ENCODE measurements at regions of chr2 and their contacts with region 1.

Region 1: GRCh38 chr2:15560988-15561573 is at the start of gene NBAS:
- DNase-seq: peak; percentile 90
- ATAC-seq: peak; percentile 87
- H3K4me3 Mint-ChIP-seq: peak within 1 kb of the TSS; percentile 92
- H3K27ac Mint-ChIP-seq: peak within 1 kb of the TSS; percentile 90
- H3K4me1 Mint-ChIP-seq: peaks cover 26% of the 10 kb centered on the region
- H3K27me3 Mint-ChIP-seq: no peaks in the 10 kb centered on the region
- CTCF ChIP-seq: no peak
- total RNA-seq, gene NBAS: 40.9 to 41.9 TPM

Region 2: DNA sequence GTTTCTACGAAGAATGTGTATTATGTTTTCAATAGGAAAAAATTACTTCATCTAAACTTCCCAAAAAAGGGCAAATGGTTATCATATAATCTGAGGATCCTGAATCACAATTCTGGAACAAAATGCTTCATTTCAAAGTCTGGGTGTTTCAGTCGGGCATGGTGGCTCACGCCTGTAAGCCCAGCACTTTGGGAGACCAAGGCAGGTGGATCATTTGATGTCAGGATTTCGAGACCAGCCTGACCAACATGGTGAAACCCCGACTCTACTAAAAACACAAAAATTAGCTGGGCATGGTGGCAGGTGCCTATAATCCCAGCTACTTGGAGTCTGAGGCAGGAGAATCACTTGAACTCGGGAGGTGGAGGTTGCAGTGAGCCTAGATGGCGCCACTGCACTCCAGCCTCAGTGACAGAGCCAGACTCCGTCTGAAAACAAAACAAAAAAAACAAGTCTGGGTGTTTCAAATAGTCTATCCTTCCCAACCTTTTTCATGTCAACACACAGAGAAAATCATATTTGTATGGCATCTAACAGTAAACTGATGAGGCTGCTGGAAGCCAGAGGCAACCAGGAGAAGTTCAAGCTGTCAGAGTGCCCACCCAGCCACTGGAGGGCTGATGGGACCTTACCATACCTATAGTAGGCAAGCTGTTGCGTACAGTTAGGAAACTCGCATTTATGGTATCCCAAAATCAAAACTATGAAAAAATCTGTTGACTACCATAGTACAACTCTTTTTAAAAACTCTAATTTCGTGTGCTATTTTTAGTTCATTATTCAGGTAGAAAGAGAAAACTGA is 14.6 kb before region 1 on chr2:
- CTCF ChIA-PET with region 1: interaction called, 12 read pairs
- POLR2A ChIA-PET with region 1: interaction called, 11 read pairs
- intact Hi-C with region 1: no loop called
- DNase-seq: peak; percentile 10
- ATAC-seq: no peak
- H3K4me3 Mint-ChIP-seq: no peak overlapping the region
- H3K27ac Mint-ChIP-seq: no peak overlapping the region
- H3K4me1 Mint-ChIP-seq: no peaks in the 10 kb centered on the region
- H3K27me3 Mint-ChIP-seq: no peaks in the 10 kb centered on the region
- CTCF ChIP-seq: peak; percentile 55

Region 3: GRCh38 chr2:15591692-15592463 is 30.8 kb after region 1 on chr2 and contains the start of gene DDX1:
- CTCF ChIA-PET with region 1: no interaction called
- POLR2A ChIA-PET with region 1: interaction called, 10 read pairs
- intact Hi-C with region 1: no loop called
- DNase-seq: peak; percentile 84
- ATAC-seq: peak; percentile 97
- H3K4me3 Mint-ChIP-seq: peak within 1 kb of the TSS; percentile 86
- H3K27ac Mint-ChIP-seq: peak within 1 kb of the TSS; percentile 93
- H3K4me1 Mint-ChIP-seq: peaks cover 36% of the 10 kb centered on the region
- H3K27me3 Mint-ChIP-seq: no peaks in the 10 kb centered on the region
- CTCF ChIP-seq: no peak
- total RNA-seq, gene DDX1: 90.3 to 92.5 TPM

Measured in activated CD8-positive, alpha-beta T cell treated with anti-CD3 and anti-CD28 coated beads for 36 hours (primary cell).